BJ (cell line): ENCODE measurements at regions of chr7 and their contacts with region 1.

Region 1: DNA sequence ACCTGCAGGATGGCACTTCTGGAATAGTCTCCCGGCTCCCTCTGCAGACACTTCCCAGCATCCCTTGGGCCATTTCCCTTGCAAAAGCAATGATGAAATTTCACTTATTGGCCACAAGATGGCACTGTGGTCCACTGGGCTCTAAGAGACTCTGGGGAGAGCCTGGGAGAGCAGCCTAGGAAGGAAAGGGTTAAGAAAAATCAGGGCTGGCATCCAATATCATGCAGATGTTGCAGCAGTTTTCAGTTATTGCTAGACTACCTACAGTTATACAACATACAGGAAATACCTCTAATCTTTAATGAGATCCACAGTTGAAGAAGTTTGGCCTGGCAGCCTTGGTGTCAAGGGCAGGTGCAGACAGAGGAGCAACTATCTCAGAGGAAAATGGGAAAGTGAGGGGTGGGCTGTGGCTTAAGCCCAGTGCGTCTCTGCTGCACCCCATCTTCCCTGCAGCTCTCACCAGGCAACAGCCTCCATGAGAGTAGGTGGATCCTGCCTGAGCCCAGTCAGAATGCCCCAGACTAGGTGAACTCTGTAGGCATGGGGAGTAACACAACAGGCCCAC is 100.2 kb upstream of the PRSS58 start:
- DNase-seq: no peak
- H3K4me3 ChIP-seq: no peak overlapping the region
- H3K27me3 ChIP-seq: no peaks in the 10 kb centered on the region
- CTCF ChIP-seq: peak; percentile 85

Region 2: GRCh38 chr7:142308918-142309317 is 49.1 kb before region 1 on chr7:
- CTCF ChIA-PET with region 1: no interaction called
- POLR2A ChIA-PET with region 1: no interaction called
- DNase-seq: no peak
- H3K4me3 ChIP-seq: no peak overlapping the region
- H3K27me3 ChIP-seq: no peaks in the 10 kb centered on the region
- CTCF ChIP-seq: no peak

Region 3: GRCh38 chr7:142345811-142346210 is 12.2 kb before region 1 on chr7:
- CTCF ChIA-PET with region 1: interaction called, 16 read pairs
- POLR2A ChIA-PET with region 1: no interaction called
- DNase-seq: no peak
- H3K4me3 ChIP-seq: no peak overlapping the region
- H3K27me3 ChIP-seq: no peaks in the 10 kb centered on the region; the same call in 1 of the 2 replicates
- CTCF ChIP-seq: no peak

Region 4: GRCh38 chr7:142375666-142376313 is 17.8 kb after region 1 on chr7:
- CTCF ChIA-PET with region 1: interaction called, 20 read pairs
- POLR2A ChIA-PET with region 1: no interaction called
- DNase-seq: no peak
- H3K4me3 ChIP-seq: no peak overlapping the region
- H3K27me3 ChIP-seq: no peaks in the 10 kb centered on the region; the same call in 1 of the 2 replicates
- CTCF ChIP-seq: peak; percentile 27; the same call in 1 of the 2 replicates

Region 5: GRCh38 chr7:142385491-142386340 is 27.7 kb after region 1 on chr7:
- CTCF ChIA-PET with region 1: interaction called, 47 read pairs
- POLR2A ChIA-PET with region 1: no interaction called
- DNase-seq: no peak
- H3K4me3 ChIP-seq: no peak overlapping the region
- H3K27me3 ChIP-seq: peaks cover 2% of the 10 kb centered on the region
- CTCF ChIP-seq: peak; percentile 82